Kidney (tissue), 22 donors: ENCODE measurements at regions of chr6 and their contacts with region 1.

Region 1: DNA sequence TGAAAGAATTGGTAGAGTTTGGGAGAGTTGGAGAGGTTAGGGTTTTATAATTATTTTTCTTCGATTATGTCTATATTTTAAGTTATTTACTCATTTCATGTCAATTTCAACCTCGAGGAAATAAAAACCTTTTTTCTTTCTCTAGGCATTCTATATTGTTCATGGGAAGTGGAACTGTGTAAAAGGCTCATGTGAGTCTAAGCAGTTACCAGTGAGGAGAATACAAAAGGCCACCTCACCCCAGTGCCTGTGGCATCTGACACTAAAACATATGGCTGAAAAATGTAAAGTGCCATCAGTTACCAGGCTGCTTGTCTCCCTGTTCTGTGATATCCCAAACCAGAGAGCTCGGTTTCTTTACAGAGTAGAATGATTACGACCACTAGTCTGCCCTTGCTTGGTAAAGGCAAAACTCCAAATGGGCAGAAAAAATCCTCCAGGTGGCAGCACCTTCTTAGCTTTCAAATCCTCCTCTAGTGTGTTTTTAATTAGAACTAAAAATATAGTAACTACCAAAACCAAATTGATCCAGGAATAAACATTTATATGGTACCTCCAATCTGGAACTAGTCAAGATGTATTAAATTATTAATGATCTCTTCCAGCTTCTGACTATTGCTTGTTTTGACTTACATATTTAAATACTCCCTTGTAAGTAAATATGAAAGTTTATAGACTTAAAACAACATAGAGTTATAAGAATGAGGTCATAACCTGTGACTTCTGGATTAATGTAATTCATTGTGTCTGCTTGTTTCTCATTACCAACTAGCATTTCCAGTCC is 122.6 kb upstream of the MCHR2 start:
- DNase-seq: peak in 3 of 5 donors; percentile 67 to 84 (median 82)
- H3K4me3 ChIP-seq: no peak overlapping the region
- H3K27ac ChIP-seq: no peak overlapping the region
- H3K4me1 ChIP-seq: no peaks in the 10 kb centered on the region
- H3K27me3 ChIP-seq: peaks cover 3% of the 10 kb centered on the region
- CTCF ChIP-seq: peak; percentile 56

Region 2: GRCh38 chr6:100202417-100203194 is 86.0 kb after region 1 on chr6:
- intact Hi-C with region 1: no loop called
- DNase-seq: no peak
- H3K4me3 ChIP-seq: no peak overlapping the region
- H3K27ac ChIP-seq: no peak overlapping the region
- H3K4me1 ChIP-seq: no peaks in the 10 kb centered on the region
- H3K27me3 ChIP-seq: no peaks in the 10 kb centered on the region
- CTCF ChIP-seq: no peak

Region 3: DNA sequence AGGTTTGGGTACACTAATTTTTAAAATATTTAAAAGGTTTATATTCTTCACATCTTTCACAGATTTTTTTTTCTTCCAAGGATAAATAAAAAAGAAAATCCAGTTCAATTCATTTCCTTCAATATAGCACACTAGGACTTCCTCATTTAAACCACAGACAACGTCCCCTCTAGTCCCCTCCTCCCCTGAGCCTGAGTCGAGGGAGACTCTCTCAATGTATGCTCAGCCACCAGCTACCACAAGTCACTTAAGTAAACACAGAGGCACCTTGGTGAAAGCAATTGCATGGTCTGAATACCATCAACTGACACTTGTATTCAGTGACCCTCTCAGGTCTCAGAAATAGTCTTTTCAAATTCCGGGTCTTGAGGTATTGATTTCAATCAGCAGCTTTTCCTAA is 259.5 kb after region 1 on chr6:
- intact Hi-C with region 1: no loop called
- DNase-seq: no peak
- H3K4me3 ChIP-seq: no peak overlapping the region
- H3K27ac ChIP-seq: no peak overlapping the region
- H3K4me1 ChIP-seq: no peaks in the 10 kb centered on the region
- H3K27me3 ChIP-seq: no peaks in the 10 kb centered on the region
- CTCF ChIP-seq: no peak

Region 4: DNA sequence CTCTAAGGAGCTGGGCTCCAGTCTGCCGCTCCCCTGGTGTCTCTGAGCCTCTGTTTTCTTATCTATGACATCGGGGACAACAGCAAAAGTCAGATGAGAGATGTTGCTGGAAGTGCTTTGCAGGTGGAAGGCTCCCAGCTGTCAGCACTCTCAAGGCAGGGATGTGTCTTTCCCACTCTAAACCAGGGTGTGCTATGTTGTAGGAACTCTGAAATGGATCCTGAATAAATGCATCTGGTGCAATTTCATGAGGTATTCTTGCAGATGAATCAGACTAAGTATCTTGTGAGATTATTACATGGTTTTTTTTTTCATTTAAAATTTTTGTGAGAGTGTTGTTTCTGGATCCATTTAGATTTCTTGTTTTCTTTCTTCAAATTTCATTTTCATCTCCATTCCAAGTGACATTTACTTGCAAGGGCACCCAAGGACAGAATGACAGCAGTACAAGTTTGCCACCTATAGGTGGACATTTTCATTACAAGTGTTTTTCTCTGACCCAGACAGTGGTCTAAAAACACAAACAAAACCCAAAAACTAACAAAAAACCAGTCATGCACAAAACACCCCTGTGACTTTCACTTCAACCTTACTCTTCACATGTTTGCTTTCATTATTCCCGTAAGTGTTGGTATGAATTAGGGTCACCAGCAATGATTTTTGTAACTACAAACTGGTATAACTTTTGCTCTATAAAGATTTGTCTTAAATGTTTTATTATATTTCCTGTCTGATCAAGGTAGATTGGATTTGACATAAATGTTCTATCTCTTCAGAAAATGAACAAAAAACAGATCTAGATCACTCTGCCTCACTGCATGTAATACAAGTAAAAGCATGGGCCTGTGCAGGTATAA is 362.8 kb after region 1 on chr6:
- intact Hi-C with region 1: loop called (anchors 10 kb)
- DNase-seq: peak in 2 of 5 donors; percentile 56 to 61
- H3K4me3 ChIP-seq: no peak overlapping the region
- H3K27ac ChIP-seq: peak overlapping the region in 1 of 2 donors; percentile 67
- H3K4me1 ChIP-seq: peaks cover 0 to 4% (median 4%) of the 10 kb centered on the region in 3 donors
- H3K27me3 ChIP-seq: no peaks in the 10 kb centered on the region
- CTCF ChIP-seq: peak; percentile 74